Activated CD4-positive, alpha-beta memory T cell treated with anti-CD3 and anti-CD28 coated beads, Interleukin-2, amount 10 ng/mL, durations not matched to agents 7 days and 5 days (primary cell): ENCODE measurements at regions of chr4 and their contacts with region 1.

Region 1: GRCh38 chr4:89283226-89284009 is 24.2 kb downstream of the GPRIN3 start:
- DNase-seq: peak; percentile 75
- H3K4me3 Mint-ChIP-seq: peak overlapping the region; percentile 74
- H3K27ac Mint-ChIP-seq: peak overlapping the region; percentile 96
- H3K4me1 Mint-ChIP-seq: peaks cover 71% of the 10 kb centered on the region
- H3K27me3 Mint-ChIP-seq: no peaks in the 10 kb centered on the region

Region 2: GRCh38 chr4:89245459-89245858 is 38.0 kb before region 1 on chr4:
- CTCF ChIA-PET with region 1: no interaction called
- POLR2A ChIA-PET with region 1: interaction called, 14 read pairs
- DNase-seq: no peak
- H3K4me3 Mint-ChIP-seq: no peak overlapping the region
- H3K27ac Mint-ChIP-seq: no peak overlapping the region
- H3K4me1 Mint-ChIP-seq: peaks cover 63% of the 10 kb centered on the region
- H3K27me3 Mint-ChIP-seq: no peaks in the 10 kb centered on the region

Region 3: GRCh38 chr4:89307446-89308160 is 24.2 kb after region 1 on chr4 and contains the start of gene GPRIN3:
- CTCF ChIA-PET with region 1: no interaction called
- POLR2A ChIA-PET with region 1: interaction called, 516 read pairs
- DNase-seq: peak; percentile 63
- H3K4me3 Mint-ChIP-seq: peak within 1 kb of the TSS; percentile 93
- H3K27ac Mint-ChIP-seq: peak within 1 kb of the TSS; percentile 97
- H3K4me1 Mint-ChIP-seq: peaks cover 36% of the 10 kb centered on the region
- H3K27me3 Mint-ChIP-seq: no peaks in the 10 kb centered on the region
- total RNA-seq, gene GPRIN3: 102 to 106 TPM

Region 4: GRCh38 chr4:89316931-89317366 is 33.5 kb after region 1 on chr4:
- CTCF ChIA-PET with region 1: no interaction called
- POLR2A ChIA-PET with region 1: interaction called, 11 read pairs
- DNase-seq: peak; percentile 39
- H3K4me3 Mint-ChIP-seq: peak overlapping the region; percentile 50
- H3K27ac Mint-ChIP-seq: peak overlapping the region; percentile 91
- H3K4me1 Mint-ChIP-seq: peaks cover 41% of the 10 kb centered on the region
- H3K27me3 Mint-ChIP-seq: no peaks in the 10 kb centered on the region

Region 5: GRCh38 chr4:90215286-90216039 is 932.0 kb after region 1 on chr4:
- CTCF ChIA-PET with region 1: no interaction called
- POLR2A ChIA-PET with region 1: no interaction called
- DNase-seq: no peak
- H3K4me3 Mint-ChIP-seq: no peak overlapping the region
- H3K27ac Mint-ChIP-seq: no peak overlapping the region
- H3K4me1 Mint-ChIP-seq: peaks cover 3% of the 10 kb centered on the region
- H3K27me3 Mint-ChIP-seq: no peaks in the 10 kb centered on the region